Heart right ventricle (tissue), 16 donors: ENCODE measurements at regions of chr18 and their contacts with region 1.

Region 1: DNA sequence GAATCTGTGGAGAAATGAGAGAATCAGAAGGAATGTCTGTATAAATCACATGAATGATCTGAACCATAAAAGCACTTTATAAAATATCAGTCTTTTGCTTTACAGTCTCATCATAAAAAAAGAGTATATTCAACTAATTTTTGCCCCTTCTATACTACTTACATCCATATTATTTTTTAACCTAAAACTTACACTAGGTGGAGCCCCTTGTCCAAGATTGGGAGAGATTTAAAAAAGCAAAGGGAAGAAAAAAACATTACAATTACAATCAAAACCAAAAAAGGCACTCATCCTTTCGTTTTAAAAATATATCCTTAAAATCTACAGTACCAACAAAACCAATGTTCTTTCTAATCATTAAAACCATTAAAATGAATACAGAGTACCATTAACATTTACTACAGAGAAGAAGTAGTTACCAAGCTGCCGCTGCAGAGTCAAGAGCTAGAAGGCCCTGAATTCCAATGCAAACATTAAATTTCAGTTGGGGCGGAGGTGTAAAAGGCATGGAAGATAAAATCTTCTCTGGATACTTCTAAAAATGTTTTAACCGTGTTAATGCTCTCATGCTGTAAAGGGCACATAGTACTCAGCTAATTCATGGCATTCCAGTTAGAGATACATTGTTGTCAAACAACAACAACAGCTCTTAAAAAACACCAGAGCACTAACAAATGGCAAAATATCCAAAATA is 56.7 kb upstream of the EPB41L3 start:
- DNase-seq: no peak
- ATAC-seq: no peak
- H3K4me3 ChIP-seq: no peak overlapping the region
- H3K27ac ChIP-seq: no peak overlapping the region
- H3K4me1 ChIP-seq: no peaks in the 10 kb centered on the region
- H3K27me3 ChIP-seq: peaks cover 0 to 12% (median 0%) of the 10 kb centered on the region in 7 donors
- CTCF ChIP-seq: peak in 8 of 9 donors; percentile 24 to 61 (median 47)

Region 2: DNA sequence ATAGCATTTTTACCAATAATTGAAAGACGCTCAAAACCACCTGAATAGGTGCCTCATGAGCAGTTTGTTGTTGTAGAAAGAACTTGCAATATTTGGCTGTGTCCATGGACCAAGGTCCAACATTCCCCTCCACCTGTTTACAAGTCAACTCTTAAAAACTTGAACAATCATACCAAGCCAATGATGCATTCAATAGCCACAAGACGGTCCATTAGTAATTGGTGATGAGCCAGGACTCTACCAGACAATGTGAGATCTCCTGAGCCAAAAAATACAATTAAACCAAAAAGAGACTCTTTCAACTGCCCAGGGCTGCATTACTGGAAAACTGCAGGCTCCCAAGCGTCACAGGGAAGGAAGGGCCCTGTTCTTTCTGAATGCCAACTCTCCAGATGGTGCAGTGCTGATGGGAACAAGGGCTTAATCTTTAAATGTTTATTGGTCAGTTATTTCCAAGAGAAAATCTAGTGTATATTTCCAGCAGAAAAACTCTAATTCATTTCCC is 62.1 kb after region 1 on chr18:
- intact Hi-C with region 1: loop called in 1 of 10 experiments (anchors 10 kb)
- DNase-seq: no peak
- ATAC-seq: no peak
- H3K4me3 ChIP-seq: no peak overlapping the region
- H3K27ac ChIP-seq: no peak overlapping the region
- H3K4me1 ChIP-seq: no peaks in the 10 kb centered on the region
- H3K27me3 ChIP-seq: peaks cover 0 to 5% (median 0%) of the 10 kb centered on the region in 7 donors
- CTCF ChIP-seq: no peak

Region 3: DNA sequence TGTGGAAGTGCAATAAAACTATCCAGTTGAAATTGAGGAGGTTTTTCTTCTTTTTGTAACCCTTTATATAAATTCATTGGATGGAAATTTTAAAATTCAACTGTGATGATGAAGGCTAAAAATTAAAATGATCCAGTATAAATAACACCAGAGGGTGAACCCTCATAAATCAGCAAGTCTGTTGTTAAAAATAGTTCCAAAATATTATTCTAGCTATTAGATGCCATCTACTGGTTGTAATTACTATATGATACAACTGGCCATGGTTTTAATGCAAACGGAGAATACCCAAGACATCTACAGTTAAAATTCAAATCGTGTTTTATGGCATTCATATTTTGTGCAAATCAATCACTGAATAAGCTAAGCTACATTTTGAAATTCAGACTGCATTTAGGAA is 241.0 kb after region 1 on chr18:
- intact Hi-C with region 1: loop called in 6 of 10 experiments (anchors 2 to 10 kb)
- DNase-seq: no peak
- ATAC-seq: no peak
- H3K4me3 ChIP-seq: no peak overlapping the region
- H3K27ac ChIP-seq: no peak overlapping the region
- H3K4me1 ChIP-seq: no peaks in the 10 kb centered on the region
- H3K27me3 ChIP-seq: peaks cover 0 to 20% (median 7%) of the 10 kb centered on the region in 7 donors
- CTCF ChIP-seq: peak in 4 of 9 donors; percentile 19 to 36 (median 31)

Region 4: DNA sequence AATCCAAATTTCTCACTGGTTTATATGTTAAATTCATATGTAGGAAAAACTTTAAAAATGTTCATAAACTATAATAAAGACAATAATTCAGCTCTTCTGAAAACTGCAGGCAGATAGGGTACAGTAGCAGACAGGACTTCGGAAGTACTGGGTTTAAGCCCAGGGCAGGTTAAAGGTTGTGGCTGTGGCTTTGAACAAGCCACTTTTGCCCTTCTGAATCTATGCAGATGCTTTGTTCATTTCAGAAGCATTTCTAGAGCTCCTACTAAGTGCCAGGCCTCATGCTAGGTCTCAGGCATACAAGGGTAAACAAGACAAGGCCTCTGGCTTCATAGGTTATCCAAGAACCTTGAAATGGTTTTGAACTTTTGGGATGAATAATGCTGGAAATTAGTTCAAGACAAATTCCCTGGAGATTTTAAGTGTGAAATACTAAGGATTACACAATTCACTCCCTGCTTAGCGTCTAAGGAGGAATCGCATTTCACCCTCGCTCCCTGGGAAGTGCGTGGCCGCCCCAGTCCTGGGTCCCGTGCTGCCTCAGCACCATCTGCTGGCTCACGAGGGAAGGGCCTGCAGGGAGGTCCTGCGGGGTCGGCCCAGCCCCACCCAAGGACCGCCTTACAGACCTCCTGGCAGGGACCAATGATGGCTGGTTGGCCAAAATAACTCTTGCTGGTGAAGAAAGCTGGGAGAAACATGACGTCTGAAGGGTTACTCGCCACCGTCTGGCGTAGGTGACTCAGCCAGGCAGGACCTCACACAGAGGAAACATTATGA is 881.9 kb after region 1 on chr18:
- intact Hi-C with region 1: loop called in 1 of 10 experiments (anchors 10 kb)
- DNase-seq: peak; percentile 54 to 75
- ATAC-seq: peak; percentile 94 to 99 (median 96)
- H3K4me3 ChIP-seq: no peak overlapping the region
- H3K27ac ChIP-seq: no peak overlapping the region
- H3K4me1 ChIP-seq: peaks cover 0 to 23% (median 0%) of the 10 kb centered on the region in 9 donors
- H3K27me3 ChIP-seq: peaks cover 0 to 7% (median 0%) of the 10 kb centered on the region in 7 donors
- CTCF ChIP-seq: peak; percentile 63 to 93 (median 84)